Mammary epithelial cell (primary cell): ENCODE measurements at regions of chr18 and their contacts with region 1.

Region 1: GRCh38 chr18:47595815-47596496 is 334.5 kb downstream of the SMAD2 start:
- DNase-seq: no peak
- H3K4me3 ChIP-seq: no peak overlapping the region
- H3K27ac ChIP-seq: no peak overlapping the region
- H3K4me1 ChIP-seq: no peaks in the 10 kb centered on the region
- H3K27me3 ChIP-seq: peaks cover 12% of the 10 kb centered on the region
- CTCF ChIP-seq: peak; percentile 36 to 41

Region 2: DNA sequence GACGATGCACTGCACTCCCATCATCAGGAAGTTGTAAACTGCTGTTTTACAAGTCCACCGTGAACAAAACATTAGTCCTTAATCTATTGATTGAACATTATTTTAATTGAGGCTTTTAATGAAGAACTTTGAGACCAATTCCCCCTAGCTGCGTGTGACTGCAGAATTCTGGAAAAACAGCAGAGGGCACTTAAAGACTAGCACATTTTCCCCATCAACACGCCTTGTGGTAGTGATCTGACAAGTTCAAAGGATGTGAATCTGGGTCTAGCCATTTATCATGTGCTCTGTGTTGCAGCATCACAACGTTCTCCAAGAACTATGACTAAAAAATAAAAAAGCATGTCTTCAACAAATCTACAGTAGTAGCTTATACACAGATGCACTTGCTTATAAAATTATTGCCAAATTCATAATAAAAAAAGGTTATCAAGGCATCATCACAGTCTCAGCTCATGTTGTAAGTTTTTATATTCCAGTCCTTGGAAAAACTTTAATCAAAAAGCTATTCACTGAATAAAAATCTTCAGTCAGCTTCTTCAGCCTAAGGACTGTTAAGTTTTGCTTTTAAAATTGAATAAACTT is 380.3 kb before region 1 on chr18:
- CTCF ChIA-PET with region 1: interaction called, 5 read pairs
- dilution Hi-C with region 1: no loop called
- in situ Hi-C with region 1: no loop called
- intact Hi-C with region 1: loop called (anchors 5 kb)
- DNase-seq: peak; percentile 39
- H3K4me3 ChIP-seq: no peak overlapping the region
- H3K27ac ChIP-seq: no peak overlapping the region
- H3K4me1 ChIP-seq: no peaks in the 10 kb centered on the region
- H3K27me3 ChIP-seq: no peaks in the 10 kb centered on the region
- CTCF ChIP-seq: peak; percentile 63 to 81

Region 3: GRCh38 chr18:47635416-47635815 is 39.5 kb after region 1 on chr18:
- CTCF ChIA-PET with region 1: no interaction called
- dilution Hi-C with region 1: loop called (anchors 5 kb)
- in situ Hi-C with region 1: no loop called
- intact Hi-C with region 1: no loop called
- DNase-seq: no peak
- H3K4me3 ChIP-seq: no peak overlapping the region
- H3K27ac ChIP-seq: no peak overlapping the region
- H3K4me1 ChIP-seq: no peaks in the 10 kb centered on the region
- H3K27me3 ChIP-seq: no peaks in the 10 kb centered on the region
- CTCF ChIP-seq: no peak